OCI-LY7 (cell line): ENCODE measurements at regions of chr1 and their contacts with region 1.

Region 1: GRCh38 chr1:40404670-40405462 is 31.3 kb downstream of the SMAP2 start:
- DNase-seq: peak; percentile 72
- H3K4me3 ChIP-seq: no peak overlapping the region
- H3K27ac ChIP-seq: peak overlapping the region; percentile 34
- H3K4me1 ChIP-seq: peaks cover 45% of the 10 kb centered on the region
- CTCF ChIP-seq: peak; percentile 99

Region 2: DNA sequence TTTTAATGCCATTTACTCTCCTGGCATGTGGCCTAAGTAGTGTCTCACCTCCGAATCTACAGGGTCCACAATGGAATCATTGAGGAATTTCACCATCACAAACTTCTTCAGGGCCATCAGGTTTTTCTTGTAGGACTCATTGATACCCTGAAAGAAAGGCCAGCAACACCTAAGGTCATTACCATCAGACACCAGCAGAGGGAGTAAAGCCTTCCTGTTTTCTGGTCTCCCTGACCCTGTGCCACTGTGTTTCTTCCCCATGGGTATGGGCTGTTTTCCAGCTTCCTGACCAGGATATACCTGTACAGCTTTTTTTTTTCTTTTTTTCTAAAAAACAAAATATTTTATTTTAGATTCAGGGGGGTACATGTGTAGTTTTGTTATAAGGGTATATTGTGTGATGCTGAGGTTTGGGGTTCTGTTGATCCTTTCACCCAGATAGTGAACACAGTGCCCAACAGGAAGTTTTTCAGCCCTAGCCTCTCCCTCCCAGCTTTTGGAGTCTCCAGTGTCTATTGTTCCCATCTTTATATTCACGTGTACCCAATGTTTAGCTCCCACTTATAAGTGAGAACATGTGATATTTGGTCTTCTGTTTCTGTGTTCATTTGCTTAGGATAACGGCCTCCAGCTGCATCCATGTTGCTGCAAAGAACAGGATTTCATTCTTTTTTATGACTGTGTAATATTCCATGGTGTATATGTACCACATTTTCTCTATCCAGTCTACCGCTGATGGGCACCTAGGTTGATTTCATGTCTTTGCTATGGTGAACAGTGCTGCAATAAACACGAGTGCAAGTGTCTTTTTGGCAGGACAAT is 326.1 kb before region 1 on chr1:
- CTCF ChIA-PET with region 1: no interaction called
- POLR2A ChIA-PET with region 1: no interaction called
- intact Hi-C with region 1: loop called (anchors 5 kb)
- DNase-seq: peak; percentile 70
- H3K4me3 ChIP-seq: no peak overlapping the region
- H3K27ac ChIP-seq: no peak overlapping the region
- H3K4me1 ChIP-seq: no peaks in the 10 kb centered on the region
- CTCF ChIP-seq: peak; percentile 86

Region 3: GRCh38 chr1:40299366-40300248 is 105.3 kb before region 1 on chr1:
- CTCF ChIA-PET with region 1: no interaction called
- POLR2A ChIA-PET with region 1: no interaction called
- intact Hi-C with region 1: no loop called
- DNase-seq: no peak
- H3K4me3 ChIP-seq: no peak overlapping the region
- H3K27ac ChIP-seq: no peak overlapping the region
- H3K4me1 ChIP-seq: no peaks in the 10 kb centered on the region
- CTCF ChIP-seq: no peak